Activated CD4-positive, alpha-beta T cell treated with anti-CD3 and anti-CD28 coated beads for 36 hours (primary cell): ENCODE measurements at regions of chr6 and their contacts with region 1.

Region 1: GRCh38 chr6:136792410-136793262 is at the start of gene MAP3K5:
- DNase-seq: peak; percentile 97
- ATAC-seq: peak; percentile 79
- H3K4me3 Mint-ChIP-seq: peak within 1 kb of the TSS; percentile 90
- H3K27ac Mint-ChIP-seq: peak within 1 kb of the TSS; percentile 93
- H3K4me1 Mint-ChIP-seq: peaks cover 35% of the 10 kb centered on the region
- H3K27me3 Mint-ChIP-seq: no peaks in the 10 kb centered on the region
- total RNA-seq, gene MAP3K5: 6.7 to 7.3 TPM

Region 2: GRCh38 chr6:136289579-136290409 is 502.8 kb before region 1 on chr6 and contains the start of gene BCLAF1:
- CTCF ChIA-PET with region 1: interaction called, 7 read pairs
- POLR2A ChIA-PET with region 1: interaction called, 5 read pairs
- intact Hi-C with region 1: loop called (anchors 2 kb)
- DNase-seq: peak; percentile 100
- ATAC-seq: peak; percentile 83
- H3K4me3 Mint-ChIP-seq: peak within 1 kb of the TSS; percentile 100
- H3K27ac Mint-ChIP-seq: peak within 1 kb of the TSS; percentile 100
- H3K4me1 Mint-ChIP-seq: peaks cover 37% of the 10 kb centered on the region
- H3K27me3 Mint-ChIP-seq: no peaks in the 10 kb centered on the region
- total RNA-seq, gene BCLAF1: 166 to 223 TPM

Region 3: GRCh38 chr6:136593748-136594490 is 198.7 kb before region 1 on chr6:
- CTCF ChIA-PET with region 1: interaction called, 12 read pairs
- POLR2A ChIA-PET with region 1: interaction called, 4 read pairs
- intact Hi-C with region 1: loop called in 1 of 2 experiments (anchors 1 kb)
- DNase-seq: peak; percentile 70
- ATAC-seq: peak; percentile 92
- H3K4me3 Mint-ChIP-seq: peak overlapping the region; percentile 51
- H3K27ac Mint-ChIP-seq: peak overlapping the region; percentile 91
- H3K4me1 Mint-ChIP-seq: peaks cover 23% of the 10 kb centered on the region
- H3K27me3 Mint-ChIP-seq: no peaks in the 10 kb centered on the region

Region 4: DNA sequence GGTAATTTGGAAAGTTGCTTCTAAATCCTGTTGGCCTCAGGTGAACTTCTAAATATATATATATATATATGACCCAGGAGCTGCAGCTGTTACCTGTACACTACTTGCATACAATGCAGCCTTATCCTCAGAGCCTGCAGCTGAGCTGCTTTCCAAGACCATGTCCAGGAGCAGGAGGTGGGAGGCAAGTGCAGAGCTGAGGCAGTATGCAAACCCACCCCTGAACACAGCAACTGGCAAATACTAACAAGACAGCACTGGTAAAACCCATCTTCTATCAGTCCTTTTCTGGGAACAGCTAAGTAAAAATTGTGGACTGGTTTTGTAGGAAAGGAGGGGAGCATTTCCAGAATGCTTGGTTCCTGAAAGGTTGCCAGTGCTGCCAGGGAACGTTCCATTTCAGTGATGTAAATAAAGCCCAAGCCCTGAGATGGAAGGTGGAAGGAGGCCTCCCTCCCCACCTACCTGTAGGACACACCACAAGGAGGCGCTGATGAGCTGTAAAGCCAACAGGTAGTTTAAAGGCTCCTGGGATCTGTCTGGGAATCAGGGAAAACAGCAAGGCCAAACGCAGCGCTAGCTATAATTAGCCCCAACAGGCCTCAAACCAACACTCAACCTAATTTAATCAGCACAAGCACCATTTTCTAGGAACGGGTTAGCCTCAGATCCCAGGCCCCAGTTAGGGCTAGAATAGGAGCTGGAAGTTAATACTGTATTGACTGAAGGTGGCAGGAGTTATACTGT is 148.6 kb before region 1 on chr6:
- CTCF ChIA-PET with region 1: interaction called, 263 read pairs
- POLR2A ChIA-PET with region 1: interaction called, 13 read pairs
- intact Hi-C with region 1: loop called (anchors 1 kb)
- DNase-seq: peak; percentile 90
- ATAC-seq: peak; percentile 57
- H3K4me3 Mint-ChIP-seq: no peak overlapping the region
- H3K27ac Mint-ChIP-seq: no peak overlapping the region
- H3K4me1 Mint-ChIP-seq: no peaks in the 10 kb centered on the region
- H3K27me3 Mint-ChIP-seq: no peaks in the 10 kb centered on the region

Region 5: GRCh38 chr6:136710877-136711552 is 81.6 kb before region 1 on chr6:
- CTCF ChIA-PET with region 1: interaction called, 12 read pairs
- POLR2A ChIA-PET with region 1: no interaction called
- intact Hi-C with region 1: no loop called
- DNase-seq: no peak
- ATAC-seq: no peak
- H3K4me3 Mint-ChIP-seq: no peak overlapping the region
- H3K27ac Mint-ChIP-seq: no peak overlapping the region
- H3K4me1 Mint-ChIP-seq: peaks cover 3% of the 10 kb centered on the region
- H3K27me3 Mint-ChIP-seq: no peaks in the 10 kb centered on the region

Region 6: DNA sequence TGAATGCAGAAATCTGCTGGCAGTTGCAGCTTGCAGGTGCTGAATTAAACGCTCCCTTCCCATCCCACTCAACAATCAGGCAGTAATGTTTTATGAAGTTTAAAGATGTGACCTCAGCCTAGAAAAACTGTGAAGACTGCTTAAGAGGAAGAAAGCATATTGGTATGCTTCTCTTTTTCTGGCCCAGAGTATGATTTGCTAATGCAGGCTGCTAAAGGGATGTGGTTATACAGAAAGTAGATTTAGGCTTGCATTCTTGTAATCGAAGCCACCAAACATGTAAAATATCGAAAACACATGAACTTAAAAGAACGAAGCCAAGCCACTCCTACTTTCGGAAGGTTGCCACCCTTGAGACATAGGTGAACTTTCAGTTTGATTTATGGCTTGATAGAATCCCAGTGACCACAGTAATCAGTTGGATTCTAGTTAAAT is 41.1 kb before region 1 on chr6:
- CTCF ChIA-PET with region 1: interaction called, 16 read pairs
- POLR2A ChIA-PET with region 1: no interaction called
- intact Hi-C with region 1: loop called (anchors 1 to 2 kb)
- DNase-seq: peak; percentile 46
- ATAC-seq: peak; percentile 72
- H3K4me3 Mint-ChIP-seq: peak overlapping the region; percentile 42
- H3K27ac Mint-ChIP-seq: peak overlapping the region; percentile 63
- H3K4me1 Mint-ChIP-seq: peaks cover 68% of the 10 kb centered on the region
- H3K27me3 Mint-ChIP-seq: no peaks in the 10 kb centered on the region

Region 7: GRCh38 chr6:136921936-136922684 is 129.5 kb after region 1 on chr6 and contains the start of gene SLC35D3:
- CTCF ChIA-PET with region 1: interaction called, 7 read pairs
- POLR2A ChIA-PET with region 1: no interaction called
- intact Hi-C with region 1: loop called in 1 of 2 experiments (anchors 1 kb)
- DNase-seq: peak; percentile 41
- ATAC-seq: peak; percentile 35
- H3K4me3 Mint-ChIP-seq: peak within 1 kb of the TSS; percentile 69
- H3K27ac Mint-ChIP-seq: no peak within 1 kb of the TSS
- H3K4me1 Mint-ChIP-seq: peaks cover 18% of the 10 kb centered on the region
- H3K27me3 Mint-ChIP-seq: peaks cover 51% of the 10 kb centered on the region
- total RNA-seq, gene SLC35D3: not detected